ENCODE measurements at regions of chr10 and their contacts with region 1.

Region 1: GRCh38 chr10:35027567-35027966 is 62.6 kb downstream of the CUL2 start:
- DNase-seq: no peak
- CTCF ChIP-seq: peak; percentile 14

Region 2: DNA sequence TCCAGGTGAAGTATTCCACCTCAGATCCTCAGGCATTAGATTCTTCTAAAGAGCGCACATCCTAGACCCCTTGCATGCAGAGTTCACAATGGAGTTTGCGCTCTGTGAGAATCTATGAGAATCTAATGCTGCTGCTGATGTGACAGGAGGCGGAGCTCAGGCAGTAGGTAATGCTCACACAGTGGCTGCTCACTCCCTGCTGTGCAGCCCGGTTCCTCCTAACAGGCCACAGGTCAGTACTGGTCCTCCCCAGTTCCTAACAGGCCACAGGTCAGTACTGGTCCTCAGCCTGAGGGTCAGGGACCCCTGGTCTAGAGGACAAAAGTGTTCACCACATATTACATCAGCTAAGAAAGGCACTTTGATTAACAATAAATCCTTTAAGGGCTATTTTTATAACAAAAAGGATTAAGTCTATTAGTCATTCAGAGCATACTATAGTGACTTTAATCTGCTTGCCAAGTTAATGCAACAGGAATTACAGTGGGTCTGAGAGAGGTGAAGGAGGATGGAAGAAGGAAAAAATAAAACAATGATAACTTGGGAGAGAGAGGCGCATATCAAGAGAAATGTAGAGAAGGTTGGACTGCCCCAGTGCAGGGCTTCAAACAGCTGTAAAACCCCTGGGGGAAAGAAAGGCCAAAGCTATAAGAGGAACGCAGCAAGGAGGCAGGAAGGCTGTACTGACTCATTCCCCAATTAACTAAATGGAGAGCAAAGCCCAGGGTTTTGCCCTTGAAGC is 13.4 kb after region 1 on chr10:
- CTCF ChIA-PET with region 1: interaction called, 12 read pairs
- POLR2A ChIA-PET with region 1: no interaction called
- DNase-seq: no peak
- CTCF ChIP-seq: no peak

Measured in GM10248 (cell line).